ENCODE measurements at regions of chr22 and their contacts with region 1.

Region 1: GRCh38 chr22:33579448-33580093 is 340.7 kb downstream of the LARGE1 start:
- DNase-seq: peak; percentile 83
- H3K4me3 Mint-ChIP-seq: no peak overlapping the region
- H3K27ac Mint-ChIP-seq: no peak overlapping the region
- H3K4me1 Mint-ChIP-seq: no peaks in the 10 kb centered on the region
- H3K27me3 Mint-ChIP-seq: no peaks in the 10 kb centered on the region

Region 2: GRCh38 chr22:33302049-33302545 is 277.5 kb before region 1 on chr22:
- intact Hi-C with region 1: loop called (anchors 2 kb)
- DNase-seq: peak; percentile 86
- H3K4me3 Mint-ChIP-seq: no peak overlapping the region
- H3K27ac Mint-ChIP-seq: no peak overlapping the region
- H3K4me1 Mint-ChIP-seq: no peaks in the 10 kb centered on the region
- H3K27me3 Mint-ChIP-seq: no peaks in the 10 kb centered on the region

Region 3: DNA sequence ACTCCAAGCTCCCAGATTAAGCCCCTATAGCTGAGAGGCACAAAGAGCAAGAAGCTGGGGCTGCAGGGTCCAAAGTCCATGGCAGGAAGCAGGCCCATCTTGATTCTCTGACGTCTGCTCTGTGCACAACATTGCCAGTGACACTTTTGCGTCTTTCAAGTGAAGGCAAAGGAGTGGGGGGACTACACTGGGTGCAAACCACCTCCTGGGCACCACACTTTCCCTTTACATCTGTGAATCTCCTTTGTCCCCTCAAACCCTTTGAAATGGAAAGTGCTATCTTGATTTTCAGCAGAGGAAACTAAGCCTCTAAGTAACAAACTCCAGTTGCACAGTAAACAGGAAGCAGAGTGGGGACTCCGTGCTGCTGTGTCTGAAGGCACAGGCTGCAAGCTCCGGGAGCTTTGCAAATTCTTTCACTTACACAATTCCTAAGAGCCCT is 87.3 kb before region 1 on chr22:
- intact Hi-C with region 1: no loop called
- DNase-seq: peak; percentile 56
- H3K4me3 Mint-ChIP-seq: peak overlapping the region; percentile 54
- H3K27ac Mint-ChIP-seq: peak overlapping the region; percentile 12
- H3K4me1 Mint-ChIP-seq: no peaks in the 10 kb centered on the region
- H3K27me3 Mint-ChIP-seq: no peaks in the 10 kb centered on the region

Region 4: DNA sequence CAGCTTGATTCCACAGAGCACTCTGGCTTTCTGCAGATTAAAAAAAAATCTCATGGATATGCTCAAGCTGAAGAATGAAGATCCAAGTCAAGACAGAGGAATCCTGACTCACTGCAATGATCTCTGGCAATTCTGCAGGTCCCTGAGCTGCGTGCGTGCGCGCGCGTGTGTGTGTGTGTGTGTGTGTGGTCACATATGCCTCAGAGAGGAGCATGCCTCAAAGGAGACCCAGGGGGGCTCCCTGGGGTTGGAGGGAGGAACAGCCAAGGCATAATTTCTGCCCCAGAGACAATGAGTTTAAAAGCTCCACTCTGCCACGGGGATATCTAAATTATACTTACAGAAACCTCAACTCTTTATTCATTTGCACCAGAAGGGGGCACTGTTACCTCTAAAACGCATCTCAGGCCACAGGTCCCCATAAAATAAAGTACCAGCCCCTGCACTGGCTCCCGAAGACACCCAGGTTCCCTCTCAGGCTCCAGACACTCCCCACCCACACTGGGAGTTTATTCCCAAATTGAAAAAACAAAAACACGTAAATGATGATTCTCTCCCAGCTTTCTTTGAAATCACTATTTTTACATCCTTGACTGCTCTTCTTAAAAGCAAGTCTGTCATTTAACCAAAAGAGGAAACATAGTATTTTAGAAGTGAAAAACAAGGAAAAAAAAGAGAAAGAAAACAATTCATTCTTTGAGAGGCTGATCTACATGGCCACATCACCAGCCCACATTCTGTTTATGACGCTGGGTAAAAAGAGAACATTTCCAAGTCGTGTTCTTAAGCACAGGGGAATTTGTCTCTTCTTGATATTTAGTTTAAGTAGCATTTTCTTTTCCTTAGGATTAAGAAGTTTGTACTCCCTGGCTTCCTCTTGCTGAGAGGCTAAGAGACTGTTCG is 60.2 kb before region 1 on chr22:
- intact Hi-C with region 1: loop called (anchors 1 kb)
- DNase-seq: peak; percentile 59
- H3K4me3 Mint-ChIP-seq: no peak overlapping the region
- H3K27ac Mint-ChIP-seq: no peak overlapping the region
- H3K4me1 Mint-ChIP-seq: no peaks in the 10 kb centered on the region
- H3K27me3 Mint-ChIP-seq: no peaks in the 10 kb centered on the region

Region 5: DNA sequence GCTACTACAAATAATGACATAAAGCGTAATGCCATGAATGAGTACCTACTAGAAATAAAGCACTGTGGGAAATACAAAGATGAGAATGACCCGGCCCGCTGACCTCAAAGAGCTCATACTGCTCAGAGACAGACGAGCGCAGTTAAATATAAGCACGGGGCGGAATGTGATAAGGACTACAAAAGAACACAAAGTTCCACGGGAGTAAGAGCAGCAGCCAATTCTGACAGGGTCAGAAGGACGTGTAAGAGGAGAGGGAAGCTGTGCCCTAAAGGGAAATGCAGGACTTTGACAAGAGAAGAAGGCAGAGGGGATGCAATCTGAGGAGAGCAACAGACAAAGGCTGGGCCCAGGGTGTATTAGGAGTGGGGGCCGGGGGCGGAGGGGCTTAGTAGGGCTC is 26.1 kb after region 1 on chr22:
- intact Hi-C with region 1: no loop called
- DNase-seq: no peak
- H3K4me3 Mint-ChIP-seq: no peak overlapping the region
- H3K27ac Mint-ChIP-seq: no peak overlapping the region
- H3K4me1 Mint-ChIP-seq: no peaks in the 10 kb centered on the region
- H3K27me3 Mint-ChIP-seq: no peaks in the 10 kb centered on the region

Measured in activated CD4-positive, alpha-beta T cell treated with anti-CD3 and anti-CD28 coated beads, Interleukin-2, amount 10 ng/mL, durations not matched to agents 24 days and 14 days (primary cell).